Activated CD8-positive, alpha-beta T cell treated with anti-CD3 and anti-CD28 coated beads for 36 hours (primary cell): ENCODE measurements at regions of chr14 and their contacts with region 1.

Region 1: GRCh38 chr14:99415496-99416281 is 65.0 kb downstream of the SETD3 start:
- DNase-seq: peak; percentile 71
- ATAC-seq: peak; percentile 98
- H3K4me3 Mint-ChIP-seq: no peak overlapping the region
- H3K27ac Mint-ChIP-seq: no peak overlapping the region
- H3K4me1 Mint-ChIP-seq: peaks cover 24% of the 10 kb centered on the region
- H3K27me3 Mint-ChIP-seq: no peaks in the 10 kb centered on the region
- CTCF ChIP-seq: peak; percentile 84

Region 2: DNA sequence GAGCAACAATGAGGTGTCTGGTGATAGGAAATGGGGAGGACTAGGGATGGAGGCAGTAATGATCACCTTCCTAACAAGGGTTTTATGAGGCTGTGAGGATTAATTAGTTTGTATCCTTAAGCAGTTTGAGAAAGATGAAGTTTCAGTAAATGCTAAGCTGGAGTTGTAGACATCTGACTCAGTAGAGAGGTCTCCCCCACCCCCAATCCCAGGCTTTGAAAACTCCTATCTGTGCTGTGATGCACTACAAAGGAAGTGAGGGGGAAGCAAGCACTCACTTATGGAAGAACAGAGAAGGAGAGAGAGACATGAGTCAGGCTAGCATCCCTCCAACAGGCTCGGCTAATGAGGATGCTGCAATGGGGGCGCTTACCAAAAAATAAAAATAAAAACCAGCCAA is 138.2 kb before region 1 on chr14:
- CTCF ChIA-PET with region 1: interaction called, 12 read pairs
- POLR2A ChIA-PET with region 1: interaction called, 4 read pairs
- intact Hi-C with region 1: no loop called
- DNase-seq: no peak
- ATAC-seq: no peak
- H3K4me3 Mint-ChIP-seq: no peak overlapping the region
- H3K27ac Mint-ChIP-seq: no peak overlapping the region
- H3K4me1 Mint-ChIP-seq: peaks cover 42% of the 10 kb centered on the region
- H3K27me3 Mint-ChIP-seq: peaks cover 2% of the 10 kb centered on the region
- CTCF ChIP-seq: no peak

Region 3: DNA sequence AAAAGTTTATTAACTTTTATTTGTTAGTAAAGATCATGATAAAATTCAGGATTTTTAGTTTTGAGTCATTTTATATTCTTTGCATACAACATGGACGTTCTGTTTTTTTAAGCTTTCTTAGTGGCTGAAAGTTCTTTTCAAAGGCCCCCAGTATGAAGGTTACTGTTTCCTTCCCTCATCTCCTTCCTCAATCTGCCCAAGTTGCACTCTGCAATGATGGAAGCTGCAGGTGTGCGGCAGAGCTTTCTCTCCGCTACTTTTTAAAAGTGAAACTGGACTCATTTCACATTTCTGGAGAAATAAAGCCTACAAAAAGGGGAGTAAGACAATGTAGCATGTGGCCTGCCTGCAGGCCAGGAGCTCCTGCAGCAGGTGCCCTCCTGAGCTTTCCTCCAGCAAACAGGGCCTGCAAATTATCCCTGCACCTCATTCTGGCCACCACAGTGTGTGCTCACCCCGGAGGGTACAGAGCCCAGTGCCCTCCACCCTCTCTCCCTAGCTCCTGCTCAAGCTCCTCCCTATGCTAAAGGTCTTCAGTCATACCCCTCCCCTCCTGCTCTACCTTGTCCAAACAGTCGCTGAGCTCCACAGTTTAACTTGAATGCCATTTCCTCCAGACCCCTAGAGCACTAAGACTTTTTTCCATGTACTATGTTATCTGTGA is 13.9 kb before region 1 on chr14:
- CTCF ChIA-PET with region 1: interaction called, 33 read pairs
- POLR2A ChIA-PET with region 1: no interaction called
- intact Hi-C with region 1: no loop called
- DNase-seq: no peak
- ATAC-seq: peak; percentile 10
- H3K4me3 Mint-ChIP-seq: no peak overlapping the region
- H3K27ac Mint-ChIP-seq: no peak overlapping the region
- H3K4me1 Mint-ChIP-seq: peaks cover 5% of the 10 kb centered on the region
- H3K27me3 Mint-ChIP-seq: no peaks in the 10 kb centered on the region
- CTCF ChIP-seq: no peak

Region 4: GRCh38 chr14:99427632-99428300 is 12.1 kb after region 1 on chr14:
- CTCF ChIA-PET with region 1: interaction called, 41 read pairs
- POLR2A ChIA-PET with region 1: no interaction called
- intact Hi-C with region 1: no loop called
- DNase-seq: no peak
- ATAC-seq: no peak
- H3K4me3 Mint-ChIP-seq: no peak overlapping the region
- H3K27ac Mint-ChIP-seq: no peak overlapping the region
- H3K4me1 Mint-ChIP-seq: peaks cover 10% of the 10 kb centered on the region
- H3K27me3 Mint-ChIP-seq: no peaks in the 10 kb centered on the region
- CTCF ChIP-seq: no peak

Region 5: GRCh38 chr14:99447739-99448138 is 32.0 kb after region 1 on chr14:
- CTCF ChIA-PET with region 1: no interaction called
- POLR2A ChIA-PET with region 1: no interaction called
- intact Hi-C with region 1: no loop called
- DNase-seq: no peak
- ATAC-seq: no peak
- H3K4me3 Mint-ChIP-seq: no peak overlapping the region
- H3K27ac Mint-ChIP-seq: no peak overlapping the region
- H3K4me1 Mint-ChIP-seq: no peaks in the 10 kb centered on the region
- H3K27me3 Mint-ChIP-seq: no peaks in the 10 kb centered on the region
- CTCF ChIP-seq: no peak

Region 6: DNA sequence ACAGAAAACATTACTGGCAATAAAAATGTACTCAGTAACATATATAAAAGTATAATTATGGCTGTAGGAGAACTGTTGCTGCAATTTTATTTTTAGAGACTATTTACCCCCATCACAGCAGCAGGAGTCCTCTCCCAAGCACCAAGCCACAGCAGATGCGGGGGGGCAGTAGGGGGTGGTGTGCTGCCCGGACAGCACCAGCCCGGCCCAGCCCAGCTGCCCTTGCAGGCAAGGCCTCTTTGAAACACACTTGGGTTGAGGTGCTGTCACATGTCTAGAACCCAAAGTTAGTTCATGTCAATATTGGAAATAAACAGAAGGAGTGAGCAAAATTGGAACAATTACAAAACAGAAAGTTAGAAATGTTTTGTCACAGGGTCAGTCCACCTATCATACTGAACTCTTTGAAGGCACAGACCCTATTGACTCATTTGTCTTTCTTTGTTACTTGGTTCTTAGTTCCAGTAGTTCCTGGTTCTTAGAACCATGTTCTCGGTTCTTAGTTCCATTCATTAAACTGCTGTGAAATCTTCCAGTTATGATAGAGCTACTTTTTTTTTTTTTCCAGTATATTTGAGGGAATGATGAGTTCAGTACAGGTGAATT is 88.3 kb after region 1 on chr14:
- CTCF ChIA-PET with region 1: no interaction called
- POLR2A ChIA-PET with region 1: no interaction called
- intact Hi-C with region 1: no loop called
- DNase-seq: no peak
- ATAC-seq: no peak
- H3K4me3 Mint-ChIP-seq: no peak overlapping the region
- H3K27ac Mint-ChIP-seq: peak overlapping the region; percentile 44
- H3K4me1 Mint-ChIP-seq: no peaks in the 10 kb centered on the region
- H3K27me3 Mint-ChIP-seq: no peaks in the 10 kb centered on the region
- CTCF ChIP-seq: no peak